WTC11 (cell line): ENCODE measurements at regions of chr11 and their contacts with region 1.

Region 1: GRCh38 chr11:45771566-45772448 is 33.1 kb upstream of the SLC35C1 start:
- DNase-seq: peak; percentile 92
- ATAC-seq: peak; percentile 93
- H3K4me3 Mint-ChIP-seq: peak overlapping the region; percentile 78
- H3K27ac Mint-ChIP-seq: no peak overlapping the region
- H3K4me1 Mint-ChIP-seq: peaks cover 2% of the 10 kb centered on the region; the same call in 1 of the 2 replicates
- H3K27me3 Mint-ChIP-seq: peaks cover 12% of the 10 kb centered on the region
- CTCF ChIP-seq: peak; percentile 65

Region 2: GRCh38 chr11:45371251-45372115 is 400.3 kb before region 1 on chr11:
- CTCF ChIA-PET with region 1: interaction called, 157 read pairs
- POLR2A ChIA-PET with region 1: interaction called, 4 read pairs
- DNase-seq: peak; percentile 93
- ATAC-seq: peak; percentile 91
- H3K4me3 Mint-ChIP-seq: peak overlapping the region; percentile 65
- H3K27ac Mint-ChIP-seq: no peak overlapping the region
- H3K4me1 Mint-ChIP-seq: peaks cover 16% of the 10 kb centered on the region
- H3K27me3 Mint-ChIP-seq: peaks cover 13% of the 10 kb centered on the region
- CTCF ChIP-seq: peak; percentile 93

Region 3: GRCh38 chr11:45538363-45538762 is 233.4 kb before region 1 on chr11:
- CTCF ChIA-PET with region 1: interaction called, 13 read pairs
- POLR2A ChIA-PET with region 1: no interaction called
- DNase-seq: no peak
- ATAC-seq: no peak
- H3K4me3 Mint-ChIP-seq: no peak overlapping the region
- H3K27ac Mint-ChIP-seq: no peak overlapping the region
- H3K4me1 Mint-ChIP-seq: no peaks in the 10 kb centered on the region
- H3K27me3 Mint-ChIP-seq: peaks cover 3% of the 10 kb centered on the region
- CTCF ChIP-seq: no peak

Region 4: DNA sequence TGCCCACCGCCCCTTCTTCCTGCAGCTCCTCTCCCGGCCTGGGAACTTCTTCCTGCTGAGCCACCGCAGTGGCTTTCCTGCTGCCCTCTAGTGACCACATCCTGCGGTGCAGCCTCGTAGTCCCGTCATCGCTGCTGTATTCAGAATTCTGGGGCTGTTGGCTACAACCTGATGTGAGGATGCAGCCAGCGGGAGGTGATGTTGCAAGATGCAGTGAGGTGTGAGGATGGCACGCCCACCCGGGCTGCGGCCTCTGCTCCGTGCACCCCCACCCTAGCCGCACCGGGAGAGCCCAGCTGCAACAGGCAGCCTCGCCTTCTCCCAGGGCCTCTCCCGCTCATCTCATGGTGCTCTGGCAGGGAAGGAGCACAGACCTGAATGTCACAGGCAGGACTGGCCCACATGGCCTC is 116.5 kb before region 1 on chr11:
- CTCF ChIA-PET with region 1: interaction called, 184 read pairs
- POLR2A ChIA-PET with region 1: interaction called, 3 read pairs
- DNase-seq: peak; percentile 93
- ATAC-seq: peak; percentile 73
- H3K4me3 Mint-ChIP-seq: no peak overlapping the region; the same call in 1 of the 2 replicates
- H3K27ac Mint-ChIP-seq: no peak overlapping the region; the same call in 1 of the 2 replicates
- H3K4me1 Mint-ChIP-seq: peaks cover 31% of the 10 kb centered on the region
- H3K27me3 Mint-ChIP-seq: no peaks in the 10 kb centered on the region; the same call in 1 of the 2 replicates
- CTCF ChIP-seq: peak; percentile 89

Region 5: GRCh38 chr11:45692808-45693453 is 78.9 kb before region 1 on chr11:
- CTCF ChIA-PET with region 1: interaction called, 17 read pairs
- POLR2A ChIA-PET with region 1: no interaction called
- DNase-seq: no peak
- ATAC-seq: no peak; the same call in 1 of the 2 replicates
- H3K4me3 Mint-ChIP-seq: no peak overlapping the region
- H3K27ac Mint-ChIP-seq: no peak overlapping the region
- H3K4me1 Mint-ChIP-seq: peaks cover 6% of the 10 kb centered on the region; the same call in 1 of the 2 replicates
- H3K27me3 Mint-ChIP-seq: peaks cover 12% of the 10 kb centered on the region
- CTCF ChIP-seq: no peak

Region 6: GRCh38 chr11:45724145-45724544 is 47.7 kb before region 1 on chr11:
- CTCF ChIA-PET with region 1: interaction called, 45 read pairs
- POLR2A ChIA-PET with region 1: no interaction called
- DNase-seq: no peak
- ATAC-seq: peak; percentile 72
- H3K4me3 Mint-ChIP-seq: peak overlapping the region; percentile 4; the same call in 1 of the 2 replicates
- H3K27ac Mint-ChIP-seq: peak overlapping the region; percentile 17; the same call in 1 of the 2 replicates
- H3K4me1 Mint-ChIP-seq: peaks cover 17% of the 10 kb centered on the region
- H3K27me3 Mint-ChIP-seq: no peaks in the 10 kb centered on the region; the same call in 1 of the 2 replicates
- CTCF ChIP-seq: no peak

Region 7: DNA sequence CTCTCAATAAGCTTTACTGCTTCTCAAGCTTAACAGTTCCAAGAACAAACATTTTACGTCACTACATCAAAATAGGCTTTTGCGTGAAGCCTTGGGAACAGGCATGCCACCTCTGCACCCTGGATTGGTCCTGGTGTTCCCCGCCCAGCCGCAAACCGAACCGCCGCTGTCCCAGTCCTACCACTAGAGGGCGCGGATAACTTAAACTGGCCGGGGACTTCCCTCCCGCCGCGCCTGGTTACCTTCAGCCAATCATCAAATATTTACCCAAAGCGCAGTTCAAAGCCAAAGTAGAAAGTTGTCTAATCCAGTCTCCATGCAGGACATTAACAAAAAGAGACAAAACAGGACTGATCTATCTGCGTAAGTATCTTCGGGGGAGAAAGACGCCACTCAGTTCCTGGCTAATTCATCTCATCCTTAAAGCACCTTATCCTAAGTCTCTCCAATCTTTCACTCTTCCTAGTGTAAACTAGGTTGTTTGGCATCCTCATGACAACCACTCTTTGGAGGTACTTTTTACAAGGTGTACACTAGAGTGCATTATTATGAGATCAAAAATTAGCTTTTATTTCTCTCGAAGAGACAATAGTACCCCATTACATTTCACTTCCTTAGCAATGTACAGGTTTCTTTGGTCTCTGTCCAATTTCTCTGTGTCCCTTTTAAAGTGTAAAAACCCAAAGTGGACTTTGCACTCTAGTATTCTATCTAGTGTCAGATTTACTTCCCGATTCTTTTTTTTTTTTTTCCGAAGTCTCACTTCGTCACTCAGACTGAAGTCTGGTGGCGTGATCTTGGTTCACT is 71.5 kb after region 1 on chr11:
- CTCF ChIA-PET with region 1: interaction called, 15 read pairs
- POLR2A ChIA-PET with region 1: no interaction called
- DNase-seq: peak; percentile 91
- ATAC-seq: peak; percentile 29
- H3K4me3 Mint-ChIP-seq: no peak overlapping the region
- H3K27ac Mint-ChIP-seq: no peak overlapping the region
- H3K4me1 Mint-ChIP-seq: peaks cover 7% of the 10 kb centered on the region
- H3K27me3 Mint-ChIP-seq: peaks cover 36% of the 10 kb centered on the region
- CTCF ChIP-seq: peak; percentile 92